B cell (primary cell): ENCODE measurements at regions of chr2 and their contacts with region 1.

Region 1: GRCh38 chr2:160429248-160430000 is 64.2 kb downstream of the RBMS1 start:
- DNase-seq: peak; percentile 70
- ATAC-seq: no peak
- H3K4me3 ChIP-seq: no peak overlapping the region
- H3K4me3 Mint-ChIP-seq: no peak overlapping the region
- H3K27ac ChIP-seq: no peak overlapping the region
- H3K27ac Mint-ChIP-seq: peak overlapping the region; percentile 32
- H3K4me1 ChIP-seq: peaks cover 30 to 35% of the 10 kb centered on the region in 2 donors
- H3K4me1 Mint-ChIP-seq: peaks cover 35% of the 10 kb centered on the region
- H3K27me3 ChIP-seq: no peaks in the 10 kb centered on the region
- H3K27me3 Mint-ChIP-seq: no peaks in the 10 kb centered on the region
- CTCF ChIP-seq: peak; percentile 78

Region 2: GRCh38 chr2:160137464-160137863 is 292.0 kb before region 1 on chr2:
- CTCF ChIA-PET with region 1: no interaction called
- POLR2A ChIA-PET with region 1: no interaction called
- intact Hi-C with region 1: no loop called
- DNase-seq: no peak
- ATAC-seq: no peak
- H3K4me3 ChIP-seq: no peak overlapping the region
- H3K4me3 Mint-ChIP-seq: no peak overlapping the region
- H3K27ac ChIP-seq: no peak overlapping the region
- H3K27ac Mint-ChIP-seq: no peak overlapping the region
- H3K4me1 ChIP-seq: no peaks in the 10 kb centered on the region
- H3K4me1 Mint-ChIP-seq: no peaks in the 10 kb centered on the region
- H3K27me3 ChIP-seq: no peaks in the 10 kb centered on the region
- H3K27me3 Mint-ChIP-seq: peaks cover 7% of the 10 kb centered on the region
- CTCF ChIP-seq: no peak

Region 3: DNA sequence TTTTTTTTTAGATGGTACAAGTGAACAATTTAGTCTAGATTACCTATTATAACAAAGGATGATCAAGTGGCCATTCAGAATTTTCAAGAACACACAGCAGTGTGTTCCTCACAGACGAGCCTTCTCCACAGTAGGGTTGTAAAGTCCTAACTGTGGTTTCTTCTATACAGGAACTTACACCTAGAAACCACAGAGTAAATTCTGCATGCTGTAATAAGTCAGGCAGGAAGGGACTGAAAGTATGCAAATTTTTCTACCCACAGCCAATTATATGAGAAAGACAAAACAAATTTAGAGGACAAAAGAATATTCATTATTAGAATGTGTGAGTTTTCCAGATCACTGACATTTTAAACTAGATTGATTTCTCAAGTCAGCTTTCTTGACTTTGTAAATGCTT is 35.3 kb before region 1 on chr2:
- CTCF ChIA-PET with region 1: interaction called, 4 read pairs
- POLR2A ChIA-PET with region 1: no interaction called
- intact Hi-C with region 1: loop called (anchors 5 kb)
- DNase-seq: peak; percentile 70
- ATAC-seq: peak; percentile 98
- H3K4me3 ChIP-seq: peak overlapping the region in 1 of 5 experiments; percentile 44
- H3K4me3 Mint-ChIP-seq: peak overlapping the region; percentile 44
- H3K27ac ChIP-seq: peak overlapping the region in 1 of 2 donors; percentile 14
- H3K27ac Mint-ChIP-seq: no peak overlapping the region
- H3K4me1 ChIP-seq: peaks cover 62 to 69% of the 10 kb centered on the region in 2 donors
- H3K4me1 Mint-ChIP-seq: peaks cover 57% of the 10 kb centered on the region
- H3K27me3 ChIP-seq: no peaks in the 10 kb centered on the region
- H3K27me3 Mint-ChIP-seq: no peaks in the 10 kb centered on the region
- CTCF ChIP-seq: no peak